ENCODE measurements at regions of chr6 and their contacts with region 1.

Region 1: DNA sequence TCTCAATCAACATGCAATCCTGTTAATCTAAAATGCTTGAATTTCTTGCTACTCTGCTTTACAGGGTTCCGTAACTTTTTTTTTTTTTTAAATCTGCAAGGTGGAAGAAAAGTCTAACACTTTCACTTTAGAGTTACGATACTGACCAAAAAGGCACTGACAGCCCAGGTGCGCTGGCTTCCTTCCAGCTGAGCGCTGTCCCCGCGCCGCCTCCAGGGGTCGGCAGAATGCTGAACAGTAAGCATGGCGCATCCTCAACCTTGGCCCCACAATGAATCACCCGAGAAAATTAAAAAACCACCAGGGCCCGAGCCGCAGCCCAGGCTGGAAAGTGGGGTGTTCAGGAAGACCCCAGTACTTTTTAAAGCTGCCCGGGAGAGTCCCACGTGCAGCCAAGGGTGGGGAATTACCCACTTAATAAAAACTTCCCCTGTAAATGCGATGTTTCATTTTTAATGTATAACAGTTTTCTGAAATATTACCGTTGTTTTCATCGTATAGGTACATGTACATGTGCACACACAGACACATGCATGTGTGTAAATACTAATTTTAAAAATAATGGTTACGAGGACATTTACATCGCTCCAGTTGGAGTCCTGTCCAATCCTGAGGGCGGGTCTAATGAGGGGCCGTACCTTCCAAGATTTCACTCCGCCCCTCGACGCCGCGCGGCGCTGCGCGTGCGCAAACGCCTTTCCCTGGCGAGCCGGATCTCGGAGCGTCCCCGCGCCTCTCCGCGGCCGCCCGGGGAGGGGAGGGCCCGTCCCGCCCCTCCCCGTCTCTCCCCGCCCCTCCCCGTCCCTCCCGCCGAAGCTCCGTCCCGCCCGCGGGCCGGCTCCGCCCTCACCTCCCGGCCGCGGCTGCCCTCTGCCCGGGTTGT is at the start of gene GINM1:
- DNase-seq: peak; percentile 100
- H3K4me3 Mint-ChIP-seq: peak within 1 kb of the TSS; percentile 94
- H3K27ac Mint-ChIP-seq: peak within 1 kb of the TSS; percentile 91
- H3K4me1 Mint-ChIP-seq: peaks cover 11% of the 10 kb centered on the region
- H3K27me3 Mint-ChIP-seq: peaks cover 4% of the 10 kb centered on the region
- total RNA-seq, gene GINM1: 18.0 and 19.9 TPM in 2 replicates

Region 2: DNA sequence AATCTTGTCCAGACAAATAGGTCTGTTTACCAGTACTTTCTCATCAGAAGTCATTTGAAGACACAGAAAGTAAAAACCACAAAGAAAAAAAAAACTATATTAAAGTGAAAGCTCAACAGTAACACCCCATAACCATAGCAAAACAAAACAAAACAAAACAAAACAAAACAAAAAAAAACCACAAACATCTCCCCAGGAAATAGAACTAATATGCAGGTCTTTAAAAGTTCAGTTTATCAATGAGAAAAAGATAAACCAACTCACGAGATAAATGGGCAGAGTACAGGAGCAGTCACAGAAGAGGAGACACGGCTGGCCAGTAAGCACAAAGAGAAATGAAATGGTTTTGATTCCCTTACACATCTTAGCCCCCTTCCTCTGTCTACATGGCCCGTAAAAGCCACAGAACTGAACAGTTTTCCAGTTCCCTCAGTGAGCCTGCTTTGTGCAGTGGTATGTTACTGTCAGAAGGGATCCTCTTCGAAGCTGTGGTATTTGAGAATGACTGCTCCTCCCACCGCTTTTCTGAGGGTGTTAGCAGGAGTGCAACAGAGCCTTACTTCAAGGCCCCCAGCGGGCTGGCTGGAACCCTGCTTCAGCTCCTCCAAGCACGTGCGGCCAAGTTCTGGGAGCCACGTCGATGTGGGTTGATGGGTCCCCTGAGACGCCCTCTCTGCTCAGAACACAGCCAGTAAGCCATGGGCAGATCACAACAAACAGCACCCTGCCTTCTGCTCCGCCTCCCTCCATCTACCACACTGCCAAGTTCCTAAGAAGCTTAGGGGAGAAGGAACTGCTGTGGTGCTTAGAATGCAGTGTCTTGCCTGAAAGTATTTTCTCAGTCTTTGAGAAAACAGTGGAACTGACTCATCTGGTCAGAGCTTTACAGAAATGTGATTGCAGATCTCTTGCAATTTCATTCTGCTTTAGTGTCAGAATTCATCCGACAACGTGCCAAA is 804.9 kb before region 1 on chr6:
- intact Hi-C with region 1: loop called (anchors 5 kb)
- DNase-seq: peak; percentile 80
- H3K4me3 Mint-ChIP-seq: peak overlapping the region; percentile 63
- H3K27ac Mint-ChIP-seq: peak overlapping the region; percentile 74
- H3K4me1 Mint-ChIP-seq: peaks cover 32% of the 10 kb centered on the region
- H3K27me3 Mint-ChIP-seq: peaks cover 63% of the 10 kb centered on the region

Region 3: GRCh38 chr6:149545754-149546528 is 19.8 kb before region 1 on chr6 and contains the start of gene PPIL4:
- intact Hi-C with region 1: loop called (anchors 1 kb)
- DNase-seq: peak; percentile 99
- H3K4me3 Mint-ChIP-seq: peak within 1 kb of the TSS; percentile 94
- H3K27ac Mint-ChIP-seq: peak within 1 kb of the TSS; percentile 98
- H3K4me1 Mint-ChIP-seq: peaks cover 22% of the 10 kb centered on the region
- H3K27me3 Mint-ChIP-seq: peaks cover 10% of the 10 kb centered on the region
- total RNA-seq, gene PPIL4: 24.2 and 28.4 TPM in 2 replicates

Region 4: DNA sequence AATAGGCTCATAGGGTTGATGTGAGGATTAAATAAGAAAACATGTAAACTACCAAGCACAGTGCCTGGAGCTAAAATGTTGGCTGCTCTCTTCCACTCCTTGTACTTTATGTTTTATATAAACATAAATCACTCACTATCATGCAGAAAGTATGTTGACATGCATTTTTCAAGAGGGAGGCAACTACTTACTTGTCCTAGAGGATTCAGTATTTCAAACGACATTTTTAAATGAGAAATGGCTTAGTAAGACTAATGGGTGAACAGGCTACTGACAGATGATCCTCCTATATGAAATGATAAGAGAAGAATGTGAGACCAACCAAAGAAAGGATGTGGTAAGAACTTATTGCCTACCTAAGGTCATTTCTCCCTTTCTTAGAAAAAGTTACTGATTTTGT is 131.1 kb after region 1 on chr6:
- intact Hi-C with region 1: no loop called
- DNase-seq: no peak
- H3K4me3 Mint-ChIP-seq: no peak overlapping the region
- H3K27ac Mint-ChIP-seq: peak overlapping the region; percentile 17
- H3K4me1 Mint-ChIP-seq: peaks cover 10% of the 10 kb centered on the region
- H3K27me3 Mint-ChIP-seq: no peaks in the 10 kb centered on the region

Region 5: GRCh38 chr6:149717588-149718458 is 152.1 kb after region 1 on chr6 and contains the start of gene LATS1:
- intact Hi-C with region 1: loop called (anchors 1 kb)
- DNase-seq: peak; percentile 98
- H3K4me3 Mint-ChIP-seq: peak within 1 kb of the TSS; percentile 98
- H3K27ac Mint-ChIP-seq: peak within 1 kb of the TSS; percentile 98
- H3K4me1 Mint-ChIP-seq: peaks cover 32% of the 10 kb centered on the region
- H3K27me3 Mint-ChIP-seq: no peaks in the 10 kb centered on the region
- total RNA-seq, gene LATS1: 31.8 and 33.7 TPM in 2 replicates

Region 6: GRCh38 chr6:149863697-149864577 is 298.2 kb after region 1 on chr6 and contains the start of gene LRP11:
- intact Hi-C with region 1: loop called (anchors 5 kb)
- DNase-seq: peak; percentile 95
- H3K4me3 Mint-ChIP-seq: peak within 1 kb of the TSS; percentile 83
- H3K27ac Mint-ChIP-seq: no peak within 1 kb of the TSS
- H3K4me1 Mint-ChIP-seq: peaks cover 20% of the 10 kb centered on the region
- H3K27me3 Mint-ChIP-seq: peaks cover 33% of the 10 kb centered on the region
- total RNA-seq, gene LRP11: 3.7 TPM in 2 replicates

Measured in activated CD4-positive, alpha-beta T cell treated with anti-CD3 and anti-CD28 coated beads, Interleukin-2, amount 10 ng/mL, durations not matched to agents 24 days and 14 days (primary cell).